ENCODE measurements at regions of chr19 and their contacts with region 1.

Region 1: GRCh38 chr19:45103156-45103507 is 10.2 kb downstream of the PPP1R37 start:
- DNase-seq: no peak
- H3K4me3 ChIP-seq: no peak overlapping the region
- CTCF ChIP-seq: no peak

Region 2: GRCh38 chr19:45069056-45069455 is 34.1 kb before region 1 on chr19:
- in situ Hi-C with region 1: no loop called
- DNase-seq: no peak
- H3K4me3 ChIP-seq: no peak overlapping the region
- CTCF ChIP-seq: no peak

Region 3: GRCh38 chr19:45245334-45245787 is 142.2 kb after region 1 on chr19 and contains the start of gene EXOC3L2:
- in situ Hi-C with region 1: loop called (anchors 25 kb)
- DNase-seq: no peak
- H3K4me3 ChIP-seq: no peak within 1 kb of the TSS
- CTCF ChIP-seq: no peak

Region 4: GRCh38 chr19:45276284-45276687 is 173.2 kb after region 1 on chr19:
- in situ Hi-C with region 1: no loop called
- DNase-seq: no peak
- H3K4me3 ChIP-seq: no peak overlapping the region
- CTCF ChIP-seq: no peak

Region 5: DNA sequence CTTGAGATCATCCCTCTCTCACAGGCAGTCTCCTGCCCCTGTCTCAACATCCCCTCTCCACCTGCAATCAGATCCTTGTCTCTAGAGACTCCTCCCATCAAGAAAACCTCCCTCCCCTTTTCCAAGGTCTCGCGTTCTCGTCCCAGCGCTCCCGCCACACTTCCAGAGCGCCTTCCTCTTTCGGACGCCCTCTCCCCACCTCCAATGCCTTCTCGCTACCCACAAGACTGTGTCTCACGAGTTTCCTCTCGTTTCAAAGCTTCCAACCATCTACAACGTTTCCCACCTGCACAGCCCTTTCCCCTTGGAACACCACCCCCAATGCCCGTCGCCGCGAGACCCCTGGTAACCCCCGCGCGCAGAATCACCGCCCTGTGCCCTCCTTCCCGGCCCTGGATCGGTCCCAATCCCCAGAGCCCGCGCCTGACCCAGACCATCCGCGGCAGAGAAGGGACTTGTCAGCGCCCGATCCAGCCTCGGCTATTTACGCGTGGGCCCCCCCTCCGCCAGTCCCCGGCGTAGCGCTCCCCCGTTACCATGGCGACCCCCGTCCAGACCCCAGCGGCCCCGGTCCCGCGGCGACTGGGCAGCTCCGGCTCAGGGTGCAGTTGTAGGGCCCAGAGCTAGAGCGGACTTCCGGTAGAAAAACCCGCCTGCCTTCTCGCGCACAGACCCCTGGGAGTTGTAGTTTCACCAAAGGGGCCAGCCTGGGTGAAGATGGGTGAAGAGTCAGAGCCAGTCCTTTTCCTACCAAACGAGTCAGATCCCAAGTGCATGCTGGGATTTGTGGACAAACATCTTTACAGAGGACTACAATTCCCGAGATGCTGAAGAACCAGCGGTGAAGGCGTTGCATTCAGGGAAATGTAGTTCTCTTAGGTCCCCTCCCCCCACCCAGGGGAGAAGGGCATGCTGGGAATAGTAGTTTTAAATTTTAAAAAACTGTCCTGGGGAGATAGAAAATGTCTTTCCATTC is 1747.4 kb after region 1 on chr19 and contains the start of gene AP2S1:
- in situ Hi-C with region 1: no loop called
- DNase-seq: peak; percentile 99
- H3K4me3 ChIP-seq: peak within 1 kb of the TSS; percentile 97
- CTCF ChIP-seq: no peak

Measured in astrocyte of the cerebellum (primary cell).